ENCODE measurements at regions of chr6 and their contacts with region 1.

Region 1: GRCh38 chr6:6724539-6725467 is 136.3 kb downstream of the LY86 start:
- DNase-seq: no peak
- H3K4me3 ChIP-seq: peak overlapping the region; percentile 34
- H3K27me3 ChIP-seq: no peaks in the 10 kb centered on the region
- CTCF ChIP-seq: peak; percentile 64

Region 2: GRCh38 chr6:6713657-6714056 is 11.1 kb before region 1 on chr6:
- CTCF ChIA-PET with region 1: interaction called, 14 read pairs
- POLR2A ChIA-PET with region 1: no interaction called
- DNase-seq: no peak
- H3K4me3 ChIP-seq: no peak overlapping the region
- H3K27me3 ChIP-seq: no peaks in the 10 kb centered on the region
- CTCF ChIP-seq: no peak